AG04450 (cell line): ENCODE measurements at regions of chr2 and their contacts with region 1.

Region 1: DNA sequence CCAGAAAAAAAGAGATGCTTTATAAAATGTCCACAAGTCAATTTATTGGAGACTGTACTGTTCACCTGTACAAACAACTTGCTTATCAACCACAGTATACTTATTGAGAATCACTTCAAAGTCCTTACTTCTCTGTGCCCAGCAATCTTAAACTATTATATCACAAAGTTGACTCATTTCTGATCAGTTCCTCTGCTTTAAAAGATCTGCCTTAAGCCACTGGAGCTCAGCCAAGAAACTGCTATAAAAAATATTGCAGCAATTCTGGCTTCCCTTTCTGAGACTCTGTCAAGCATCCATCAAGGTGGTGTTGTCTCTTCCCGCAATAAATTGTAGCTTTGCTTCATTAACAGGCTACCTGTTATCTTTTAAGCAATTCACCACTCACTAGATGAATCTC is 375.2 kb upstream of the SPHKAP start:
- DNase-seq: no peak
- H3K4me3 ChIP-seq: no peak overlapping the region
- H3K27ac ChIP-seq: no peak overlapping the region
- H3K27me3 ChIP-seq: no peaks in the 10 kb centered on the region
- CTCF ChIP-seq: no peak

Region 2: GRCh38 chr2:227834916-227835650 is 721.6 kb before region 1 on chr2:
- CTCF ChIA-PET with region 1: no interaction called
- POLR2A ChIA-PET with region 1: no interaction called
- DNase-seq: no peak
- H3K4me3 ChIP-seq: no peak overlapping the region
- H3K27ac ChIP-seq: no peak overlapping the region
- H3K27me3 ChIP-seq: no peaks in the 10 kb centered on the region
- CTCF ChIP-seq: no peak

Region 3: GRCh38 chr2:229815858-229816257 is 1259.1 kb after region 1 on chr2:
- CTCF ChIA-PET with region 1: no interaction called
- POLR2A ChIA-PET with region 1: interaction called, 13 read pairs
- DNase-seq: no peak
- H3K4me3 ChIP-seq: no peak overlapping the region
- H3K27ac ChIP-seq: no peak overlapping the region
- H3K27me3 ChIP-seq: no peaks in the 10 kb centered on the region
- CTCF ChIP-seq: no peak